ENCODE measurements at regions of chr6 and their contacts with region 1.

Region 1: DNA sequence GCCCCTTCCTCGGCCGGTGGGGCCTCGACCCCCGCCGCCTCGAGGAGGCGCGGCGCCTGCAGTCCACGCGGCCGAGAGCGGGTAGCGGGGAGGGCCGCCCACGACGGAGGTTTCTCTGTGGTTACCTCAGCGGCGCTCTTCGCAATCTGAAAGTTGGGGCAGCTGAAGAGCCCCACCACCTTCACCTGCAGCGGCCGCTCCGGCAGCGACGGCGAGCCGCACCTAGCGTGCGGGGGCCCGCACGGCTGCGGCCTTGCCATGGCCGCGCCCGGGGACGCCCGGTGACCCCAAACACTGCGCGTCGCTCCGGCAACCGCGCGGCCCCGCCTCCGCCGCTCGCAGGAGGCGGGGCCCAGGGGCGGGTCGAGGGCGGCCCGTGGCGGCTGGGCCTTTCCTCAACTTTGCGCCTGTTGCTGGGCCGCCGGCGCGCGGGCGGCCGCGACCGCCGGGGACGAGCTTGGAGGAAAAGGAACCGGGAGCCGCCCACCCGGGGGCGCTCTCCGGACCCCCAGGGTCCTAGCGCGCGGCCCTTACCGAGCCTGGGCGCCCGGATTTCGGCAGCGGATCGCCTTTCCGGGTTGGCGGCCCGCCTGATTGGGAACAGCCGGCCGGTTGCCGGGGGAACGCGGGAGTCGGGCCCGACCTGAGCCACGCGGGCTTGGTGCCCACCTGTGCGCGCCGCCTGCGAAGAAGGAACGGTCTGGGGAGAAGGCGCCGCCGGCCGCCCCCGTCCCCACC is at the starts of genes PPIL6 and SMPD2:
- DNase-seq: peak; percentile 81
- H3K4me3 Mint-ChIP-seq: peak within 1 kb of the TSS; percentile 90
- H3K27ac Mint-ChIP-seq: peak within 1 kb of the TSS; percentile 75
- H3K4me1 Mint-ChIP-seq: peaks cover 32% of the 10 kb centered on the region
- H3K27me3 Mint-ChIP-seq: peaks cover 4% of the 10 kb centered on the region
- total RNA-seq, gene PPIL6: not detected
- total RNA-seq, gene SMPD2: 15.9 to 16.9 TPM

Region 2: DNA sequence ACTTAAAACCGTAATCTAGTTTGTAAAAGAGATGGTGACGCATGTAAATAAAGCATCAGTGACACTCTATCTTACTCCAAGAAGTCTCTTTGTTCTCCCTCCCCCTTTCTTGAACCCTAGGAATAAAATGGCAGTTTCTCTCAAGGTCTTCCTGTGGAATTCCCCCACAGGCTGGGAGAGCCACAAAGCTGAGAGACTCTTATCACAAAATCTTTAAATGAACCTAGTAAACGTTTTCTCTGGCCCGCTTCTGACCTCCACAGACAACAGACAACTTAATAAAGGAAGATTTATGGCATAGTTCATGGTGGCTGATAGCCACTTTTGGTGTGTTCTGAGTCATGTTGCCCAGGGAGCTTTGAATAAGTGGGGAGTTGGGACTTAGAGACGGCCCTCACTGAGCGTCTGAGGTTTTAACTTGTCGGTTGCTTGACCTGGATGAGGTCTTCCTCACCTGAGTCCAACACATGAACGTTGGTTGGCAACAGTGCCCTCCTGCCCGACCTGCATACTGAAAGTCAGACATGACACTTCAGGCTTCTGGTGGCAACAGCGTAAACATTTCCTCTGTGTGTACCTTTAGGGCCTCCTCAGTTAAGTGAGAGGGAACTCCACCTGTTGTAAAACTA is 755.7 kb before region 1 on chr6:
- CTCF ChIA-PET with region 1: no interaction called
- POLR2A ChIA-PET with region 1: no interaction called
- DNase-seq: no peak
- H3K4me3 Mint-ChIP-seq: no peak overlapping the region
- H3K27ac Mint-ChIP-seq: no peak overlapping the region
- H3K4me1 Mint-ChIP-seq: peaks cover 17% of the 10 kb centered on the region
- H3K27me3 Mint-ChIP-seq: no peaks in the 10 kb centered on the region

Region 3: GRCh38 chr6:109236115-109237076 is 204.1 kb before region 1 on chr6:
- CTCF ChIA-PET with region 1: no interaction called
- POLR2A ChIA-PET with region 1: no interaction called
- DNase-seq: no peak
- H3K4me3 Mint-ChIP-seq: no peak overlapping the region
- H3K27ac Mint-ChIP-seq: peak overlapping the region; percentile 57
- H3K4me1 Mint-ChIP-seq: peaks cover 20% of the 10 kb centered on the region
- H3K27me3 Mint-ChIP-seq: no peaks in the 10 kb centered on the region

Region 4: DNA sequence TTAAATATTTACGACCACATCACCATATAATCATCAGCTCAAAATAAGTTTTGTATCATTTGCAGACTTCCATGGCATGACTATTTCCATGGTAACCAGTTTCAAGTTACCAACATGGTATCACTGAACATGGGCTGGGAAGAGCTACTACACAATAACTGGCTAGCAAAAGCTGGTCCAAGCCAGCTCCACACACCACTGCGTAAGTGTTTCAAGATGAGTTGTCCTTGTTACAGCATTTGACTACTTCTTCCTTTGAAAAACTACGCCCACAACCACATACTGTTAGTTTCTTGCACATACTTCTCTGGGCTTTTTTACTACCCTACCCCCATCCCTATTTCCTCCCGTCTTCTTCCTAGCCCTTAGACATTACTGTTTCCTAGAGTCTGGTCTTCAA is 66.7 kb before region 1 on chr6:
- CTCF ChIA-PET with region 1: no interaction called
- POLR2A ChIA-PET with region 1: interaction called, 12 read pairs
- DNase-seq: peak; percentile 64
- H3K4me3 Mint-ChIP-seq: peak overlapping the region; percentile 54
- H3K27ac Mint-ChIP-seq: peak overlapping the region; percentile 89
- H3K4me1 Mint-ChIP-seq: peaks cover 78% of the 10 kb centered on the region
- H3K27me3 Mint-ChIP-seq: no peaks in the 10 kb centered on the region

Region 5: GRCh38 chr6:109482905-109483735 is 42.6 kb after region 1 on chr6 and contains the start of gene ZBTB24:
- CTCF ChIA-PET with region 1: interaction called, 5 read pairs
- POLR2A ChIA-PET with region 1: interaction called, 26 read pairs
- DNase-seq: peak; percentile 91
- H3K4me3 Mint-ChIP-seq: peak within 1 kb of the TSS; percentile 98
- H3K27ac Mint-ChIP-seq: peak within 1 kb of the TSS; percentile 88
- H3K4me1 Mint-ChIP-seq: peaks cover 46% of the 10 kb centered on the region
- H3K27me3 Mint-ChIP-seq: peaks cover 2% of the 10 kb centered on the region
- total RNA-seq, gene ZBTB24: 16.5 to 17.5 TPM

Region 6: DNA sequence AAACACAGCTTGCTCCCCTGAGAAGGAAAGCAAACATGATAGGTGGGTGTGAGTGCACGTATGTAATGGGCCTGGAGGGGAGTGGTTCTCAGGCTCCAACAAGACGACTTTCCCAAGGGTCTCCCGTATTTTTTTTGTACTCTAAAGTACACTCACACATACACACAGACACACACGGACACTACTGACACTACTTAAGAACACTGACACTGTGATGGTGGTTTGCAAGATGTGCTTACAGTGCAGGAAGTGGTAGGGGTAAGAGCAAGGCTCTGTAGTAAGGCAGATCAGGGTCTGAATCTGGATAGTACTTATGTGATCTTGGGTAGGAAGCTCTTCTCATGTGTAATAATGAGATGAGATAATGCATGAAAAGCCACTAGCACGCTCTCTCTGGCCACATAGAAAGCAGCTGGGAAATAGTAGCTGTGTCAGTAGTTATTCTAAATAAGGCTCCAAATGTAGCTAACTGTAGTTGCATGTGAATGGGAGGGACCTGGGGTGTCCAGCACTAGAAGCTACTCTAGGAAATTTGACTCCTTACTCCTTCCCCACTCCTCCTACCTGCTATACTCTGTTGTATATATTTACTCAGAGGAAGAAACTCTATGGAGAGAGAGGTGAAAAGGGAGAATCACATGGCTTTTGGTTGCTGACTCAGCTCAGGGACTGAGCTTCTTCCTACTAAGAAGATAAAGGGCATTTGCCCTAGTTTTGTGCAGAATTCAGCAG is 50.9 kb after region 1 on chr6:
- CTCF ChIA-PET with region 1: interaction called, 4 read pairs
- POLR2A ChIA-PET with region 1: interaction called, 20 read pairs
- DNase-seq: peak; percentile 56
- H3K4me3 Mint-ChIP-seq: peak overlapping the region; percentile 41
- H3K27ac Mint-ChIP-seq: peak overlapping the region; percentile 92
- H3K4me1 Mint-ChIP-seq: peaks cover 35% of the 10 kb centered on the region
- H3K27me3 Mint-ChIP-seq: peaks cover 5% of the 10 kb centered on the region